Activated B cell treated with CpG ODN at 0.5 μM for 24 hours (primary cell): ENCODE measurements at regions of chr16 and their contacts with region 1.

Region 1: DNA sequence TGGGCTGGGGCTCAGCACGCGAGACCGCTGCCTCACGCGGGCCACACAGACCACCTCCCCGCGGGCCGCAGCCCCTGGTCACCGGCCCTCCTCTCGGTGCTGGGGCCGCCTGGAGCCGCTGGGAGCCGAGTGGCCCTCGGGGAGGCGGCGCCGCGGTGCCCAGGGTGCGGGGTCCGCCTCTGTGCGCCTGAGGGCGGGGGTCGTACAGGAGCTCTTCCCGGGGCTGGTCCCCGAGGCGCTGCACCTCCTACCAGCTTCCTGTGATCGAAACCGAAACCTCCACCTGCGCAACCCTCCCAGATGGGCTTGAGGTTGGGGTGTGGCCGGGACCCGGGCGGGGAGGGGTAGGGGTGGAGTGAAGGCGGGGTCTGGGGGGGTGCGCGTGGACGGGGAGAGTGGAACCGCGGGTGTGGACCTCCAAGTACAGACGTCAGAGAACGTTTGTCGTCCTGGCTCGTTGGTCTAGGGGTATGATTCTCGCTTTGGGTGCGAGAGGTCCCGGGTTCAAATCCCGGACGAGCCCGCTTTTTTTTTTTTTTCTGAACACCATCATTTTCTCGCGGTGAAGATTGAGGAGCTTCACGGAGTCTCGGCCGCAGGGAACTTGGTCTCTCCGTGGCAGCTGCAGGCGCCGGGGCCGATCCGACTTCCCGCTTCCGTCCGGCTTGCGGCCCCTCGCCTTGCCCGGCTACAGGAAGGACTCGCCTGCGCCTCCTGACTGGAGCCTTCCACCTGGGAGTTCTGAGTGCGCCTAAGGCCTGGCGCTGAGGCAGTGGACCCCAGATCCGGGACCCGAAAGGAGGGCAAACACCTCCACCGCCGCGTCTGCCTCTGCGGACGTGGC is 23.9 kb downstream of the ZNF213 start:
- DNase-seq: peak; percentile 77
- ATAC-seq: peak; percentile 90
- H3K4me3 Mint-ChIP-seq: peak overlapping the region; percentile 91
- H3K27ac Mint-ChIP-seq: peak overlapping the region; percentile 90
- H3K4me1 Mint-ChIP-seq: peaks cover 23% of the 10 kb centered on the region
- H3K27me3 Mint-ChIP-seq: peaks cover 3% of the 10 kb centered on the region
- CTCF ChIP-seq: no peak

Region 2: GRCh38 chr16:2938206-2938605 is 220.5 kb before region 1 on chr16:
- CTCF ChIA-PET with region 1: no interaction called
- POLR2A ChIA-PET with region 1: no interaction called
- intact Hi-C with region 1: no loop called
- DNase-seq: no peak
- ATAC-seq: no peak
- H3K4me3 Mint-ChIP-seq: no peak overlapping the region
- H3K27ac Mint-ChIP-seq: no peak overlapping the region
- H3K4me1 Mint-ChIP-seq: peaks cover 4% of the 10 kb centered on the region
- H3K27me3 Mint-ChIP-seq: no peaks in the 10 kb centered on the region
- CTCF ChIP-seq: no peak

Region 3: GRCh38 chr16:3088925-3089716 is 69.6 kb before region 1 on chr16:
- CTCF ChIA-PET with region 1: no interaction called
- POLR2A ChIA-PET with region 1: interaction called, 12 read pairs
- intact Hi-C with region 1: no loop called
- DNase-seq: no peak
- ATAC-seq: no peak
- H3K4me3 Mint-ChIP-seq: no peak overlapping the region
- H3K27ac Mint-ChIP-seq: no peak overlapping the region
- H3K4me1 Mint-ChIP-seq: peaks cover 5% of the 10 kb centered on the region
- H3K27me3 Mint-ChIP-seq: peaks cover 10% of the 10 kb centered on the region
- CTCF ChIP-seq: no peak

Region 4: GRCh38 chr16:3119286-3119685 is 39.4 kb before region 1 on chr16:
- CTCF ChIA-PET with region 1: no interaction called
- POLR2A ChIA-PET with region 1: no interaction called
- intact Hi-C with region 1: no loop called
- DNase-seq: no peak
- ATAC-seq: no peak
- H3K4me3 Mint-ChIP-seq: no peak overlapping the region
- H3K27ac Mint-ChIP-seq: no peak overlapping the region
- H3K4me1 Mint-ChIP-seq: peaks cover 10% of the 10 kb centered on the region
- H3K27me3 Mint-ChIP-seq: peaks cover 4% of the 10 kb centered on the region
- CTCF ChIP-seq: no peak

Region 5: GRCh38 chr16:3173892-3174617 is 15.4 kb after region 1 on chr16:
- CTCF ChIA-PET with region 1: interaction called, 4 read pairs
- POLR2A ChIA-PET with region 1: interaction called, 28 read pairs
- intact Hi-C with region 1: no loop called
- DNase-seq: no peak
- ATAC-seq: peak; percentile 10
- H3K4me3 Mint-ChIP-seq: peak overlapping the region; percentile 24
- H3K27ac Mint-ChIP-seq: peak overlapping the region; percentile 12
- H3K4me1 Mint-ChIP-seq: peaks cover 31% of the 10 kb centered on the region
- H3K27me3 Mint-ChIP-seq: peaks cover 56% of the 10 kb centered on the region
- CTCF ChIP-seq: no peak